PC-9 (cell line): ENCODE measurements at regions of chr7 and their contacts with region 1.

Region 1: GRCh38 chr7:74275401-74275881 is 13.8 kb upstream of the CLIP2 start:
- DNase-seq: no peak
- H3K4me3 ChIP-seq: no peak overlapping the region
- H3K27ac ChIP-seq: no peak overlapping the region
- H3K4me1 ChIP-seq: peaks cover 39% of the 10 kb centered on the region
- H3K27me3 ChIP-seq: no peaks in the 10 kb centered on the region
- CTCF ChIP-seq: peak; percentile 70

Region 2: DNA sequence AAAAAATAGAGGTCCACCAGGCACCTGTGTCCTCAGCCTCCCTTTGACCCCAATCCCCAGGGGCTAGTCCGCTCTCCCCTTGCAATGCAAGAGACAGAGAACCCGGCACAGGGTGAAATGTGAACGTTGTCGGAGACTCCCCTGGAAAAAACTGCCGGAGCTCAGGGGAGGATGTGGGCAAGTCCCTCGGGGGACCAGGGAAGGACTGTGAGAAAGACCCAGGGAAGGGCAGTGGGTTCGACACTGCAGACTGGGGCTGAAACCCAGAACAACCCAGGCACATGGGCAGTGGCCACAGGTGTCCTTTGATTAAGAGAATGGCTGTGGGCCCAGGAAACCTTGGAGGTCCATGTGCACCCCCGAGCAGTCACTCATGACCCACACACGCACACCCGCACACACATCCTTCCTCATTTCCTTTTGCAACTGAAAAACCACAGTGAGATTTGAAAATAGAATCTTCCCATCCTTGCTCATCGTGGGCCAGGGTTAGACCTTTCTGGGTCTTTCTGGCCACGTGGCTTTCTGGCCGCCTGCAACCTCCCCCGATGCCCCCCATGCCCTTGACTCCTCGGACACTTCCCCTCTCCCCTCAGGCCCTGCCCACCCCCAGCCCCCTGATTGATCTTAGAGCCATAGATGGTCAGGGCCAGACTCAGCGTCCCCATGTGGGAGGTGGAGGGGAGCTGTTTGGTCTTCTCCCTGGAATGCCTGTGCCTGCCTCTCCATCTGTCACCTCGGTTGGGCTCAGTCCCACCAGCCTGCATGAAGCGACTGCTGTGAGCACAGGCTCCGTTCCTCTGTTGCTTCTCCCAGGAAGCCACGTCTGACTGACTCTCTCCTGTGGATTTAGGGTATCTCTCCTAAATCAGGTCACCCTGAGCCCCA is 57.7 kb before region 1 on chr7:
- CTCF ChIA-PET with region 1: no interaction called
- POLR2A ChIA-PET with region 1: no interaction called
- intact Hi-C with region 1: no loop called
- DNase-seq: no peak
- H3K4me3 ChIP-seq: no peak overlapping the region
- H3K27ac ChIP-seq: no peak overlapping the region
- H3K4me1 ChIP-seq: no peaks in the 10 kb centered on the region
- H3K27me3 ChIP-seq: no peaks in the 10 kb centered on the region
- CTCF ChIP-seq: no peak

Region 3: GRCh38 chr7:74233655-74234285 is 41.7 kb before region 1 on chr7:
- CTCF ChIA-PET with region 1: no interaction called
- POLR2A ChIA-PET with region 1: no interaction called
- intact Hi-C with region 1: no loop called
- DNase-seq: no peak
- H3K4me3 ChIP-seq: no peak overlapping the region
- H3K27ac ChIP-seq: no peak overlapping the region
- H3K4me1 ChIP-seq: no peaks in the 10 kb centered on the region
- H3K27me3 ChIP-seq: no peaks in the 10 kb centered on the region
- CTCF ChIP-seq: no peak

Region 4: GRCh38 chr7:74306730-74307469 is 31.5 kb after region 1 on chr7:
- CTCF ChIA-PET with region 1: no interaction called
- POLR2A ChIA-PET with region 1: interaction called, 19 read pairs
- intact Hi-C with region 1: no loop called
- DNase-seq: no peak
- H3K4me3 ChIP-seq: no peak overlapping the region
- H3K27ac ChIP-seq: no peak overlapping the region
- H3K4me1 ChIP-seq: peaks cover 23% of the 10 kb centered on the region
- H3K27me3 ChIP-seq: no peaks in the 10 kb centered on the region
- CTCF ChIP-seq: no peak